Cardiac septum (tissue), 1 donor: ENCODE measurements at regions of chr16 and their contacts with region 1.

Region 1: GRCh38 chr16:4330277-4330874 is 14.5 kb downstream of the GLIS2 start:
- DNase-seq: peak; percentile 95

Region 2: DNA sequence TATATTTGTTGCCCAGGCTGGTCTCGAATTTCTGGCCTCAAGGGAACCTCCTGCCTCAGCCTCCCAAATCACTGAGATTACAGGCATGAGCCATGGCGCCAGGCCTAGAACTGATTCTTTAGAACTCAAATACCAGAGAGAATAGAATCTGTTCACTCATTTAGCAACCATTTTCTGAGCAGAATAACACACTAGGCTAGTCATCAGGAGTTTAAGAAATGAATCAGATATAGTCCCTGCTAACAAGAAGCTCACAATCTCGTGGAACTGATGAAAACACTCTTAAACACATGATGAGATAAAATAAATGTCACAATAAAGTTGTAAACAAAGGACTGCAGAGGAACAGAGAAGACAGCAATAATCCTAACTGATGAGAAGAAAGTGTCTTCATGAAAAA is 158.3 kb before region 1 on chr16:
- intact Hi-C with region 1: no loop called
- DNase-seq: no peak

Region 3: GRCh38 chr16:4271176-4272066 is 59.0 kb before region 1 on chr16:
- intact Hi-C with region 1: loop called (anchors 5 kb)
- DNase-seq: peak; percentile 97

Region 4: DNA sequence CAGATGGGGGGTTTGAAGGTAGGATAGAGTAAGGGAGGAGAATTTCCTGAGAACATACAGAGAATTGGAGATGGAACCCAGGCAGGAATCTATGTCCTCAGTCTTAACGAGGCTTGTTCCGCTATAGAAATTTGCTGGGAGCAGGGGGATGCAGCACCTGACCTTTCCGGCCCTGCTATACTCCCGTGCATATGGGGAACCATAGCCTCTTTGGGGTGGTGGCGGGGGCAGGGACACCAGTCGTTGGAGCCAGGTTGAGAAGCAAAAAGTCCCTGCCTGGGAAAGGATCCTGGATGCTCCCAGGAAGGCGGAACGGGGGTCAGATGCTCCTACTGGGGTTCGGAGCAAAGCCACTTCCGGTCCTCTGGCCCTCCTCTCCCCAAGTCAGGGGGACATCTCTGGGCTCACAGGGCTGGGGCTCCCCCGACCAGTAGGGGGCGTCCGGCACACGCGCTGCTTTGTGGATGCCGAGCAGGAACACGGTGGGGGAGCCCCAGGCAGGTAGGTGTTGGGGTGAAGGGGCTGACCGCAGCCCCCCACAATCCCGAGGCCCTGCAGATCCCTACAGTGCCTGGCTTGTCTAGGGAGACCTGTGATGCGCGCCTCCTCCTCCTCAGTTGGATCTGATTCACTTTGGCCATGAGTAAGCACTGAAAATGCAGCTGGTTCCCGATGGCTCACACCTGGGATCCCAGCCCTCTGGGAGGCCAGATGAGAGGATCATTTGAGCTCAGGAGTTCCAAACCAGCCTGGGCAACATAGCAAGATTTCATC is 42.0 kb before region 1 on chr16:
- intact Hi-C with region 1: loop called (anchors 1 kb)
- DNase-seq: peak; percentile 89

Region 5: DNA sequence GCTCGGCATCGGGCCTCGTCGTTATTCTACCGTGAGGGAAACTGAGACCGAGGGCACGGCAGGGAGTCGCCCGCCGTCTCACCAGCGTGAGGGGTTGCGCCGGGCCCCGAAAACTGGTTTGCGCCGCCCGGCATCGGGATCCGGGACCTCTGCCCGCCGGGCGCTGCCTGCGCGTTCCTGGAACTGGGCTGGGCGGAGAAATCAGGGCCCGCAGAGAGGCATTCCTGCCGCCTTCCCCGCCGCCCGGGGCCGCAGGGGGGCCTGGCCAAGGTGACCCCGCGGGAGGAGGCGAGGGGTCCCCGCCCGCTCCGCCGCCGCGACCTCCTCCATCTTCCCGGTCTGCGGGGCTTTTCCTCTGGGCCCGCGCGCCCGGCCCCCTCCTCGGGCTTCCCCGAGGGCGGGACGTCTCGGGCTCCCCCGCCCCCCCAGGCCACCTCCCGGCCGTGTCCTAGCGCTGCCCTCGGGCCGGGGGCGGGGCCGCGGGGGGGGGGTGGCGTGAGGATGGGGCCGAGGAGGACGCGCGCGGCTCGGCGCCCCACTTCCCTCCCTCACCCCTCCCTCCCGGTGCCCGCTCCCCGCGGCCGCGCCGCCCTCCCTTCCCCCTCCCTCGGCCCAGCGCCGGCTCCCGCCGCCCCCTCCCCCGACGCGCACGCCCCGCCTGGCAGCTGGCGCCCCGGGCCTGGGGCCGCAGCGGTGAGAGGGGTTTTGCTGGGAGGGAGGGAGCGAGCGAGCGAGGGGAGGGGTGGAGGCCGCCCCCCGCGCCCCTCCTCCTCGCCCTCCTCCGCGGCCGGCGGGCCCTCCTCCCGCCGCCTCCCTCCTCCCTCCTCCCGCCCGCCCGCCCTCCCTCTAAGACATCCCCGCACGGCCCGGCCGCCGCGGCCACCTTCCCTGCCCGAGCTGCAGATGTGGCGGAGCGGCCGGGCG is 14.9 kb before region 1 on chr16 and contains the start of gene GLIS2:
- intact Hi-C with region 1: loop called (anchors 2 kb)
- DNase-seq: peak; percentile 85
- total RNA-seq, gene GLIS2: 31.4 TPM